Panc1 (cell line): ENCODE measurements at regions of chr5 and their contacts with region 1.

Region 1: GRCh38 chr5:63401436-63402046 is 560.7 kb downstream of the HTR1A start:
- DNase-seq: peak; percentile 22
- ATAC-seq: peak; percentile 91
- H3K4me3 ChIP-seq: no peak overlapping the region
- H3K27ac ChIP-seq: no peak overlapping the region
- H3K4me1 ChIP-seq: no peaks in the 10 kb centered on the region
- H3K27me3 ChIP-seq: no peaks in the 10 kb centered on the region
- CTCF ChIP-seq: peak; percentile 84

Region 2: GRCh38 chr5:63963080-63963735 is 561.7 kb after region 1 on chr5:
- CTCF ChIA-PET with region 1: interaction called, 7 read pairs
- POLR2A ChIA-PET with region 1: no interaction called
- in situ Hi-C with region 1: no loop called
- intact Hi-C with region 1: loop called (anchors 1 kb)
- DNase-seq: peak; percentile 22
- ATAC-seq: peak; percentile 80
- H3K4me3 ChIP-seq: no peak overlapping the region
- H3K27ac ChIP-seq: no peak overlapping the region
- H3K4me1 ChIP-seq: no peaks in the 10 kb centered on the region
- H3K27me3 ChIP-seq: no peaks in the 10 kb centered on the region
- CTCF ChIP-seq: peak; percentile 75